Activated CD8-positive, alpha-beta T cell treated with anti-CD3 and anti-CD28 coated beads for 36 hours (primary cell): ENCODE measurements at regions of chr1 and their contacts with region 1.

Region 1: DNA sequence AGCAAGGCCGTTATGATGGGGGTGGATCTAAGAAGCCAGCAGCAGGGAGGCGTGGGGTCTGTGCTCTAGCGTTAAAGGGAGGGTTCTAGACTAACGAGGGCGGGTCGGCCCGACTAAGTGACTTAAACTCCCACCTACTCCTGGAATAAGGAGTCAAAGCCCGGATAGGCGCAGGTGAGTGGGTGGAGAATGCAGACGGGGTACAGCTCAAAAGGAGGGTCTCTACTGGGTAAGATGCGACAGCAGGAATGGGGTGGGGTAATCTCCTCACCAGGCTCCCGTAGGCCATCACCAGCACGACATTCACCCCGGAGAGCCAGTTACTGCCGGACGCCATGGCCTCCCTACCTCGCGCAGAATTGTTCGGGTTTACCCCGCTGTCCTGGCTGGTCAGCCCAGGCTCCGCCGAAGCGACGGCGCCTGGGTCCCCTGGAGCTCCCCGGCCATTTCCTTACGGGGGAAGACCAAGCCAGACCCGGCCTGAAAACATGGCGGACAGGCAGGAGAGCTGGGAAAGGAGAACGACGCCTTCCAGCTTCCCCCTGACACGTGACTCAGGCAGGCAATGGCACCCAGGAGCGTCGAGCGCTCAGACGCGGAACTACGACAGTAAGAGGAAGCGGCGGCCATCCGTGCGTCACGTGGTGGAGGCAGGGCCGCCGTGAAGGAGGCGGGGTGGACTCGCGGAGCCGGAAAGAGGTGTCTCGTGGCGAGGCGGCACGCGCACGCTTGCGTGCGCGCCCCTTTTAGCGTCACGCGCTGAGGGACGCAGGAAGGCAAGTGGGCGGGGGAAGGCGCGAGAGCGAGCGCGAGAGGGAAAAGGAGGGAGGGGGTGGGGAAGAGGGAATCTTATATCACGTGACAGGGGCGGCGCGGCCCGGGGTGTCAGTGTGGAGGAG is at the start of gene UBAP2L:
- DNase-seq: peak; percentile 99
- ATAC-seq: peak; percentile 93
- H3K4me3 Mint-ChIP-seq: peak within 1 kb of the TSS; percentile 96
- H3K27ac Mint-ChIP-seq: peak within 1 kb of the TSS; percentile 98
- H3K4me1 Mint-ChIP-seq: peaks cover 61% of the 10 kb centered on the region
- H3K27me3 Mint-ChIP-seq: no peaks in the 10 kb centered on the region
- CTCF ChIP-seq: no peak
- total RNA-seq, gene UBAP2L: 183 to 195 TPM

Region 2: GRCh38 chr1:154183045-154183915 is 37.0 kb before region 1 on chr1:
- CTCF ChIA-PET with region 1: no interaction called
- POLR2A ChIA-PET with region 1: interaction called, 7 read pairs
- intact Hi-C with region 1: loop called (anchors 5 kb)
- DNase-seq: peak; percentile 97
- ATAC-seq: peak; percentile 74
- H3K4me3 Mint-ChIP-seq: peak overlapping the region; percentile 97
- H3K27ac Mint-ChIP-seq: peak overlapping the region; percentile 99
- H3K4me1 Mint-ChIP-seq: peaks cover 41% of the 10 kb centered on the region
- H3K27me3 Mint-ChIP-seq: no peaks in the 10 kb centered on the region
- CTCF ChIP-seq: no peak

Region 3: GRCh38 chr1:154198756-154199562 is 21.4 kb before region 1 on chr1:
- CTCF ChIA-PET with region 1: interaction called, 12 read pairs
- POLR2A ChIA-PET with region 1: interaction called, 3 read pairs
- intact Hi-C with region 1: no loop called
- DNase-seq: peak; percentile 65
- ATAC-seq: peak; percentile 82
- H3K4me3 Mint-ChIP-seq: no peak overlapping the region
- H3K27ac Mint-ChIP-seq: no peak overlapping the region
- H3K4me1 Mint-ChIP-seq: no peaks in the 10 kb centered on the region
- H3K27me3 Mint-ChIP-seq: peaks cover 3% of the 10 kb centered on the region
- CTCF ChIP-seq: peak; percentile 69

Region 4: GRCh38 chr1:154263465-154264332 is 43.4 kb after region 1 on chr1:
- CTCF ChIA-PET with region 1: interaction called, 3 read pairs
- POLR2A ChIA-PET with region 1: interaction called, 22 read pairs
- intact Hi-C with region 1: no loop called
- DNase-seq: peak; percentile 12
- ATAC-seq: no peak
- H3K4me3 Mint-ChIP-seq: no peak overlapping the region
- H3K27ac Mint-ChIP-seq: peak overlapping the region; percentile 78
- H3K4me1 Mint-ChIP-seq: peaks cover 52% of the 10 kb centered on the region
- H3K27me3 Mint-ChIP-seq: no peaks in the 10 kb centered on the region
- CTCF ChIP-seq: no peak

Region 5: GRCh38 chr1:154272217-154272998 is 52.1 kb after region 1 on chr1 and contains the start of gene HAX1:
- CTCF ChIA-PET with region 1: interaction called, 10 read pairs
- POLR2A ChIA-PET with region 1: interaction called, 4 read pairs
- intact Hi-C with region 1: loop called (anchors 5 kb)
- DNase-seq: peak; percentile 100
- ATAC-seq: peak; percentile 92
- H3K4me3 Mint-ChIP-seq: peak within 1 kb of the TSS; percentile 99
- H3K27ac Mint-ChIP-seq: peak within 1 kb of the TSS; percentile 99
- H3K4me1 Mint-ChIP-seq: peaks cover 47% of the 10 kb centered on the region
- H3K27me3 Mint-ChIP-seq: no peaks in the 10 kb centered on the region
- CTCF ChIP-seq: peak; percentile 85
- total RNA-seq, gene HAX1: 163 to 170 TPM